Thyroid gland (tissue), 4 donors: ENCODE measurements at regions of chr12 and their contacts with region 1.

Region 1: GRCh38 chr12:104877123-104877705 is 80.9 kb downstream of the SLC41A2 start:
- DNase-seq: peak; percentile 48 to 52
- H3K4me3 ChIP-seq: no peak overlapping the region
- H3K27ac ChIP-seq: no peak overlapping the region
- H3K4me1 ChIP-seq: no peaks in the 10 kb centered on the region
- H3K27me3 ChIP-seq: no peaks in the 10 kb centered on the region
- CTCF ChIP-seq: peak; percentile 34 to 84 (median 73)
- POLR2A ChIP-seq: no peak

Region 2: GRCh38 chr12:104201238-104202001 is 675.8 kb before region 1 on chr12:
- intact Hi-C with region 1: loop called (anchors 10 kb)
- DNase-seq: peak; percentile 23 to 32
- H3K4me3 ChIP-seq: no peak overlapping the region
- H3K27ac ChIP-seq: no peak overlapping the region
- H3K4me1 ChIP-seq: no peaks in the 10 kb centered on the region
- H3K27me3 ChIP-seq: no peaks in the 10 kb centered on the region
- CTCF ChIP-seq: peak in 5 of 6 experiments; percentile 44 to 91 (median 82)
- POLR2A ChIP-seq: no peak

Region 3: GRCh38 chr12:104381731-104382480 is 495.3 kb before region 1 on chr12:
- intact Hi-C with region 1: loop called (anchors 5 kb)
- DNase-seq: peak; percentile 78 to 82
- H3K4me3 ChIP-seq: no peak overlapping the region
- H3K27ac ChIP-seq: no peak overlapping the region
- H3K4me1 ChIP-seq: peaks cover 0 to 8% of the 10 kb centered on the region in 2 donors
- H3K27me3 ChIP-seq: no peaks in the 10 kb centered on the region
- CTCF ChIP-seq: peak; percentile 82 to 94 (median 88)
- POLR2A ChIP-seq: no peak